Activated T-helper 1 cell treated with anti-CD3 and anti-CD28 coated beads, Interleukin-12 subunit alpha, Interleukin-12 subunit beta, Interleukin-2, Interleukin-4 antibody, amounts not matched to agents 30 ng/mL and 10 ng/mL and 1 ng/mL, durations not matched to agents 14 hours and 24 hours and 36 hours (primary cell): ENCODE measurements at regions of chr16 and their contacts with region 1.

Region 1: GRCh38 chr16:57757326-57757786 is 21.8 kb downstream of the KATNB1 start:
- DNase-seq: peak; percentile 81
- H3K4me3 Mint-ChIP-seq: no peak overlapping the region
- H3K27ac Mint-ChIP-seq: no peak overlapping the region
- H3K4me1 Mint-ChIP-seq: no peaks in the 10 kb centered on the region
- H3K27me3 Mint-ChIP-seq: no peaks in the 10 kb centered on the region

Region 2: GRCh38 chr16:57795431-57795878 is 38.1 kb after region 1 on chr16:
- intact Hi-C with region 1: loop called (anchors 5 kb)
- DNase-seq: no peak
- H3K4me3 Mint-ChIP-seq: no peak overlapping the region
- H3K27ac Mint-ChIP-seq: no peak overlapping the region
- H3K4me1 Mint-ChIP-seq: peaks cover 14% of the 10 kb centered on the region
- H3K27me3 Mint-ChIP-seq: peaks cover 19% of the 10 kb centered on the region

Region 3: GRCh38 chr16:57863434-57864160 is 106.2 kb after region 1 on chr16:
- intact Hi-C with region 1: loop called (anchors 1 kb)
- DNase-seq: no peak
- H3K4me3 Mint-ChIP-seq: no peak overlapping the region
- H3K27ac Mint-ChIP-seq: no peak overlapping the region
- H3K4me1 Mint-ChIP-seq: no peaks in the 10 kb centered on the region
- H3K27me3 Mint-ChIP-seq: peaks cover 25% of the 10 kb centered on the region

Region 4: DNA sequence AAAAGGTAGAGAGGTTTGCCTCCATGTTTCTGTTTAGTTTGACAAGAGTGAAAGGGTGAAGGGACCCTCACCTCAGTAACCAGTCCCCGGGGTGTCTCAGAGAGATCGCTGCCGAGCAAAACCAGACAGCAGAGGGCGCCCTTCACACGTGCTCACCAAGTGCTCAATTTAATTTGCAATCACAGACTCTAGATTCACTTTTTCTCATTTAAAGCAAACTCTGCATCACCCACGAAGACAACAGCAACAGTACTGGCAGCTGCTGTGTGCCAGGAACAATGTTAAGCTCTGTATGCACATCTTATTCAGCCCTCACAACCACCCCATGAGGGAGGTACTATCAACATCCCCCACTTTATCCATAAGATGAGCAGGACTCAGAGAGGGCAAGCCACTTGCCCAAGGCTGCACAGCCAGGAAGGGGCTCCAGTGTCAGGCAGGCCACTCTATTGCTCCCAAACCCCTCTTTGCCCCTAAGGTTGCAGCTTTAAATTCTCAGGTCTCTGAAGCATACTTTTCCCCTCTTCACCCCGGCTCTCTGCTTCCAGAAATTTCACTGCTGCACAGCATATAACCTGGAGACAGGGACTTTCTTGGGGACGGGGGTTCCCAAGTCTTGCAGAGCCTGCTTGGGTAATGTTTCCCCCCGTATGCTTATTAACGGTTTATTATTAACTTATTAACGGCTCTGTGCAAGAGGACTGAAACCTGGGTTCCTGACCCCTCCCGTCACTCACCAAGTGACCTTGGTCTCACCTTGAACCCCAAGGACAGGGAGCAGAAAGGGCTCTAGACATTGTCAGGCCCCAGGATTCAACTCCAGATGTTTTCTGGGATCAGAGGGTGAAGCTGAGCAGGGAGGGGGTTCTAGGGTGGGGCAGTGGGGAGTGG is 142.7 kb after region 1 on chr16:
- intact Hi-C with region 1: loop called (anchors 1 kb)
- DNase-seq: peak; percentile 61
- H3K4me3 Mint-ChIP-seq: no peak overlapping the region
- H3K27ac Mint-ChIP-seq: no peak overlapping the region
- H3K4me1 Mint-ChIP-seq: peaks cover 2% of the 10 kb centered on the region
- H3K27me3 Mint-ChIP-seq: peaks cover 9% of the 10 kb centered on the region

Region 5: DNA sequence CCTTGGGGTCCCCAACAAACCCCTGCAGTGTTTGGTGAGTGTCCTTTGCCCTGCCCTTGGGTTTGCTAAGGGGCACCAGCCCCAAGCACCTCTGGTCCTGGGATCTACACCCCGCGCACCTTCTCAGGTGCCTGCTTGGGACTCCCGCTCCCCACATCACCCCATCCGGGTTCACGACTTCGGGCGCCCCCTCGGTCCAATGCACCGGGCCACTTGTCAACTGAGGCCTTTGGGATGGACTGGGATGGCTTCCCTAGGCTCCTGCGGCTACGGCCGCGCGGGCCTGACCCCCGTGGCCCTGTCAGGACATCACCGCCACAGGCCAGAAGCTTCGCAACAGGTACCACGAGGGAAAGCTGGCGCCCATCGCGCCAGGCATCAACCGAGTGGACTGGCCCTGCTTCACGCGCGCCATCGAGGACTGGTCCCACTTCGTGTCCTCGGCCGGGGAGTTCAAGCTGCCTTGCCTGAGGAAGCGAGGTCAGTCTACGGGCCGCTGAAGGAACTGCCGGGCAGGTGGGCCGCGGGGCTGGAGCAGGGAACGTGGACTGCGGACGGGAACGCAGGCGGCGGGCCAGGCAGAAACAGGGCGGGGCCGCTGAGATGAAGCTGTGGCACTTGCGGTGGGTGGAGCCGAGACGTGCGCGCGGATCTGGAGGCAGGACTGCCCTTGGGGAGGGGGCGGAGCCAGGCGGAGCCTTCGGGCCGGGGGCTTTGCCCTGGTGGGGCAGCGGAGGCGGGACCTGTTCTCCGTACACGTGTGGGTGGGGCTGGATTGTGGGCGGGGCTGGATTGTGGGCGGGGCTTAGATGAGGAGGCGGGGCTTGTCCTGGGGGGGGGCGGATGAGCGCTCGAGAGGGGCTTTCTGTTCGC is 227.2 kb after region 1 on chr16:
- intact Hi-C with region 1: loop called (anchors 1 kb)
- DNase-seq: peak; percentile 89
- H3K4me3 Mint-ChIP-seq: peak overlapping the region; percentile 85
- H3K27ac Mint-ChIP-seq: no peak overlapping the region
- H3K4me1 Mint-ChIP-seq: no peaks in the 10 kb centered on the region
- H3K27me3 Mint-ChIP-seq: peaks cover 11% of the 10 kb centered on the region